ENCODE measurements at regions of chr12 and their contacts with region 1.

Region 1: GRCh38 chr12:31659087-31659933 is at the start of gene ETFBKMT:
- DNase-seq: peak; percentile 93
- H3K4me3 ChIP-seq: peak within 1 kb of the TSS; percentile 77
- H3K27ac ChIP-seq: peak within 1 kb of the TSS; percentile 98
- H3K4me1 ChIP-seq: no peaks in the 10 kb centered on the region
- H3K27me3 ChIP-seq: no peaks in the 10 kb centered on the region
- CTCF ChIP-seq: peak; percentile 33
- total RNA-seq, gene ETFBKMT: 3.7 to 5.2 TPM

Region 2: DNA sequence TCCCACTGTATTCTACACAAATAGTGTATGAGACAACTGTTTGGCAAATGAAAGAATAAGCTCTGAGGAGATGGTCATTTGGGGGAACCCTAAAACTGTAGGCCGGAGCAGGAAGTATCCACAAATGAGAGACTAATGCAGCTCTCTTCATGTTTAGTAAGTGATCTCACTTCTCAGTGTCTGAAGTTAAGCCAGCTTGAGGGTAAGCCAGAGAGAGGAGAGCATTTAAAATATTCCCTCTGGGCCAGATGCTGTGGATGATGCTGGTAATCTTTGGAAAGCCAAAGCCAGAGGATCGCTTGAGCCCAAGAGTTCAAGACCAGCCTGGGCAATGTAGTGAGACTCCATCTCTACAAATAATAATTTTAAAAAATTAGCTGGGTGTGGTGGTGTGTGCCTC is 202.7 kb before region 1 on chr12:
- intact Hi-C with region 1: no loop called
- DNase-seq: no peak
- H3K4me3 ChIP-seq: no peak overlapping the region
- H3K27ac ChIP-seq: no peak overlapping the region
- H3K4me1 ChIP-seq: no peaks in the 10 kb centered on the region
- H3K27me3 ChIP-seq: no peaks in the 10 kb centered on the region
- CTCF ChIP-seq: no peak

Region 3: GRCh38 chr12:31728917-31729640 is 69.8 kb after region 1 on chr12 and contains the start of gene AMN1:
- intact Hi-C with region 1: loop called (anchors 5 kb)
- DNase-seq: peak; percentile 100
- H3K4me3 ChIP-seq: peak within 1 kb of the TSS; percentile 58
- H3K27ac ChIP-seq: peak within 1 kb of the TSS; percentile 94
- H3K4me1 ChIP-seq: peaks cover 4% of the 10 kb centered on the region
- H3K27me3 ChIP-seq: no peaks in the 10 kb centered on the region
- CTCF ChIP-seq: no peak
- total RNA-seq, gene AMN1: 4.4 to 4.8 TPM

Region 4: GRCh38 chr12:31959161-31959700 is 299.9 kb after region 1 on chr12 and contains the start of gene RESF1:
- intact Hi-C with region 1: loop called (anchors 5 kb)
- DNase-seq: peak; percentile 90
- H3K4me3 ChIP-seq: peak within 1 kb of the TSS; percentile 50
- H3K27ac ChIP-seq: peak within 1 kb of the TSS; percentile 87
- H3K4me1 ChIP-seq: peaks cover 8% of the 10 kb centered on the region
- H3K27me3 ChIP-seq: no peaks in the 10 kb centered on the region
- CTCF ChIP-seq: no peak
- total RNA-seq, gene RESF1: 20.8 to 34.2 TPM

Region 5: GRCh38 chr12:32069071-32069470 is 409.8 kb after region 1 on chr12:
- intact Hi-C with region 1: loop called (anchors 10 kb)
- DNase-seq: no peak
- H3K4me3 ChIP-seq: no peak overlapping the region
- H3K27ac ChIP-seq: no peak overlapping the region
- H3K4me1 ChIP-seq: no peaks in the 10 kb centered on the region
- H3K27me3 ChIP-seq: no peaks in the 10 kb centered on the region
- CTCF ChIP-seq: no peak